Activated naive CD4-positive, alpha-beta T cell treated with anti-CD3 and anti-CD28 coated beads for 36 hours (primary cell): ENCODE measurements at regions of chr11 and their contacts with region 1.

Region 1: DNA sequence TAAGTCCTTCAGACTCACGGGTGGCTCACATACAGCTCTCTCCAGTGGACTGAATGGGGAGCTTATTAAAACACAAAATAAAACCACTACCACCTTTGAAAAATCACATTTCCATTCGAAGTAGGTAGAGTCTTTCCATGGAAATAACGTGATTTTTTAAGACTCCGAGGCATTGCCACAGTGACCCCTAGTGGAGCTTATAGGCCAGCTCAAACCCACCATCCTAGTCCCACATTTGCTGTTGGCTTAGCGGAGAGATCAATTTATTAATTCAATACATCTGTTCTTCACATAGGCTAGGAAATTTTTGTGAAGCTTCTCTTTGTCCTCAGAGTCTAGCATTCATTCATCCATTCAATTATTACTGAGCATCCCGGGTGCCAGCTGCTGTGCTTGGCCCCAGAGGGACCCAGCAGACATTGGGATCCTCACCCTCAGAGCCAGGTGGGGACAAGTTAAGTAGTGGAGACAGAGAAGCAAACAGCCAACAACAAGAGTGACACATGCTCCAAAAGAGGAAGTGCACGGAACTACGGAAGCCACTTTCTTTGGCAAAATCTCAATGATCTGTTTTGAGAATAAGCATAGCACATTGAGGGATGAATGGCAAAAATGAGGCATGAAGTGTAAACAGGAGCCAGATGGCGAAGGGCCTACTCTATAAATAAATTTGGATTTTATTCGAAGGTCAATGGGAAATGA is 10.2 kb upstream of the P4HA3 start:
- DNase-seq: peak; percentile 56
- H3K4me3 Mint-ChIP-seq: no peak overlapping the region
- H3K27ac Mint-ChIP-seq: no peak overlapping the region
- H3K4me1 Mint-ChIP-seq: no peaks in the 10 kb centered on the region
- H3K27me3 Mint-ChIP-seq: peaks cover 4% of the 10 kb centered on the region

Region 2: DNA sequence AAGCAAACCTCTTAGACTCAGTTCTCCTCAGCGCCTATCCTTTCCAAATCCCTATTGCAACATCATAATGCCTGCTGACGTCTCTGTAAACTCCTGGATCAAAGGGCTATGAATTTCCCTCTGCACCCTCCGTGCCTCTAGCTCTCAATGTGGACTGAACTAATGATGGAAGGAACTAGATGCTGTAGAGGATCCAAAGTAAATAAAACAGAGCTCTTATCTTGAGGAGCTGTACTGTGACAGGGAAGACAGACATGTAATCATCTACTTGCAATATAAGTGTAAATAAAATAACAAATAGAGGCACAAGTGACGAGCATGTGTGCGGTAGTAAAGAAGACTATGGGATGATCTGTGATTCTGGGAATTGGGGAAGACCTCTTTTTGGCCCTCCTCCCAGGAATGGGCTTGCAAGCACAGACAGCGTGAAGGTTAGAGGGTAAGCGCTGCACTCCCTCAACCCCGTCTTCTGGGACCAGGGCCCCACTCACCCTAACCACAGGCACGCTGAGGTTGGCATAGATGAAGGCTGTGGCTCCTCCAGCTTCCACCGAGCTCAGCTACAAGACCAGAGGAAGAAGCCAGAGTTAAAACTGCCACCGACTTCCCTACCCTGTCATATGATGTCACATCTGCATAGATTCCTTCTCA is 52.4 kb before region 1 on chr11:
- CTCF ChIA-PET with region 1: interaction called, 16 read pairs
- intact Hi-C with region 1: no loop called
- DNase-seq: peak; percentile 45
- H3K4me3 Mint-ChIP-seq: no peak overlapping the region
- H3K27ac Mint-ChIP-seq: no peak overlapping the region
- H3K4me1 Mint-ChIP-seq: peaks cover 20% of the 10 kb centered on the region
- H3K27me3 Mint-ChIP-seq: no peaks in the 10 kb centered on the region

Region 3: DNA sequence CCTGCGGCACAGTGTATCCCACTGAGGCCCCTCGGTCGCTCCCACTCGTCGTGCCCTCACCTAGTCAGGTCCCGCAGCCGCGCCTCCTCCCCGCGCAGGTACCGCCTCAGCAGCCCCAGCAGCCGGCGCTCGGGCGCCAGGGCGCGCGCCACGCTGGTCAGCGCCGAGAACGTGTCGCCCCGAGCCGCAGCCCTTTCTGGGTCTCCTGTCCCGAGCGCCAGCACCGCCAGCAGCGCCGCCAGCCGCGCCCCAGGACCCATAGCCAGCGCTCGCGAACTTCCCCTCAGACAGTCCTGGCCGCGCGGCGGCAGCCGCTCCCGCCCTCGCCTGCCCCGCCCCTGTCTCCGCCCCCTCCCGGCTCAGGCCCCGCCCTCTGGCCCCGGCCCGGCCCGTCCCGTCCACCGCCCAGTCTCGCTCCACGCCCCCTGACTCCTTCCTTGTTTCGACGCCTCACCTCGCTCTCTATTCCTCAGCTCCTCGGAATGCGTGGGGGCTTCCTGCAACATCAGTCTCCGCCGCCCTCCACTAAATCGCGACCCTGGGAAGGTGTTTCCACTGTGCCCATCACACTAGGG is 10.2 kb before region 1 on chr11 and contains the start of gene P4HA3:
- CTCF ChIA-PET with region 1: interaction called, 10 read pairs
- intact Hi-C with region 1: no loop called
- DNase-seq: peak; percentile 60
- H3K4me3 Mint-ChIP-seq: peak within 1 kb of the TSS; percentile 54
- H3K27ac Mint-ChIP-seq: no peak within 1 kb of the TSS
- H3K4me1 Mint-ChIP-seq: peaks cover 4% of the 10 kb centered on the region
- H3K27me3 Mint-ChIP-seq: peaks cover 21% of the 10 kb centered on the region
- total RNA-seq, gene P4HA3: not detected

Region 4: DNA sequence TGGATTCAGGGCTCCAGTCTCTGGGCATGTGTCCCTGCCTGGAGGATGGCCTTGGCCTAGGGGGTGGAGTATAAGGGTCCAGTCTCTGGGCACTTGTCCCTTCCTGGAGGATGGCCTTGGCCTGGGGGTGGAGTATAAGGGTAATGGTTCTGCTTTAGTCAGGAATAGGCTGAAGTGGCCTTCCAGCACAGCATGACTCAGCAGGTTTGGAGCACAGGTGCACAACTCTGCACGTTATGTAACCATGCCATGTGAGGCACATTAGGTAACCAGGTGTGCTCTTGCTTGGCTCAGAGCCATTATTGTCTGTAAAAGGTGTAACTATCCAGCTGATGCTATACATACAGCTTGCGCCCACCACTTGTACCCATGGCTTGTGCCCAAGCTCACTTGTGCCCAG is 222.4 kb after region 1 on chr11:
- CTCF ChIA-PET with region 1: no interaction called
- intact Hi-C with region 1: no loop called
- DNase-seq: peak; percentile 9
- H3K4me3 Mint-ChIP-seq: no peak overlapping the region
- H3K27ac Mint-ChIP-seq: no peak overlapping the region
- H3K4me1 Mint-ChIP-seq: no peaks in the 10 kb centered on the region
- H3K27me3 Mint-ChIP-seq: no peaks in the 10 kb centered on the region